Activated CD8-positive, alpha-beta T cell treated with anti-CD3 and anti-CD28 coated beads, Interleukin-2, amount 10 ng/mL, durations not matched to agents 7 days and 5 days (primary cell): ENCODE measurements at regions of chr7 and their contacts with region 1.

Region 1: GRCh38 chr7:73738612-73739374 is at the start of gene ABHD11:
- DNase-seq: peak; percentile 98
- ATAC-seq: peak; percentile 82
- H3K4me3 Mint-ChIP-seq: peak within 1 kb of the TSS; percentile 94
- H3K27ac Mint-ChIP-seq: peak within 1 kb of the TSS; percentile 98
- H3K4me1 Mint-ChIP-seq: peaks cover 29% of the 10 kb centered on the region
- H3K27me3 Mint-ChIP-seq: no peaks in the 10 kb centered on the region
- total RNA-seq, gene ABHD11: 20.7 to 20.9 TPM

Region 2: GRCh38 chr7:73522105-73522872 is 216.5 kb before region 1 on chr7 and contains the start of gene BAZ1B:
- CTCF ChIA-PET with region 1: interaction called, 3 read pairs
- POLR2A ChIA-PET with region 1: interaction called, 12 read pairs
- DNase-seq: peak; percentile 99
- ATAC-seq: peak; percentile 94
- H3K4me3 Mint-ChIP-seq: peak within 1 kb of the TSS; percentile 98
- H3K27ac Mint-ChIP-seq: peak within 1 kb of the TSS; percentile 100
- H3K4me1 Mint-ChIP-seq: peaks cover 62% of the 10 kb centered on the region
- H3K27me3 Mint-ChIP-seq: no peaks in the 10 kb centered on the region
- total RNA-seq, gene BAZ1B: 111 to 112 TPM

Region 3: GRCh38 chr7:73606801-73607691 is 131.7 kb before region 1 on chr7:
- CTCF ChIA-PET with region 1: interaction called, 115 read pairs
- POLR2A ChIA-PET with region 1: no interaction called
- DNase-seq: peak; percentile 71
- ATAC-seq: peak; percentile 83
- H3K4me3 Mint-ChIP-seq: no peak overlapping the region
- H3K27ac Mint-ChIP-seq: no peak overlapping the region
- H3K4me1 Mint-ChIP-seq: peaks cover 3% of the 10 kb centered on the region
- H3K27me3 Mint-ChIP-seq: peaks cover 11% of the 10 kb centered on the region

Region 4: DNA sequence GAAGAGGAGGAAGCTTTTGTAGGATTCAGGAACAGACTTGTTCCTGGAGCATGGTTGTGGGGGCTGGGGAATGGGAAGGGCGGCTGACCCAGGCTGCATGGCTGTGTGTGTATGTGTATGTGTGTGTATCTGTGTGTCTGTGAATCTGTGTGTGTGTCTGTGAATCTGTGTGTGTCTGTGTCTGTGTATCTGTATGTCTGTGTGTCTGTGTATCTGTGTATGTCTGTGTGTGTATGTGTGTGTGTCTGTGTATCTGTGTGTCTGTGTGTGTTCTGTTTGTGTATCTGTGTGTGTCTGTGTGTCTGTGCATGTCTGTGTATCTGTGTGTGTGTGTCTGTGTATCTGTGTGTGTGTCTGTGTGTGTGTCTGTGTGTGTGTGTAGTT is 12.7 kb before region 1 on chr7:
- CTCF ChIA-PET with region 1: interaction called, 16 read pairs
- POLR2A ChIA-PET with region 1: no interaction called
- DNase-seq: no peak
- ATAC-seq: peak; percentile 43
- H3K4me3 Mint-ChIP-seq: no peak overlapping the region
- H3K27ac Mint-ChIP-seq: no peak overlapping the region
- H3K4me1 Mint-ChIP-seq: no peaks in the 10 kb centered on the region
- H3K27me3 Mint-ChIP-seq: peaks cover 18% of the 10 kb centered on the region

Region 5: GRCh38 chr7:73851410-73852234 is 112.8 kb after region 1 on chr7:
- CTCF ChIA-PET with region 1: interaction called, 21 read pairs
- POLR2A ChIA-PET with region 1: no interaction called
- DNase-seq: peak; percentile 37
- ATAC-seq: peak; percentile 65
- H3K4me3 Mint-ChIP-seq: no peak overlapping the region
- H3K27ac Mint-ChIP-seq: no peak overlapping the region
- H3K4me1 Mint-ChIP-seq: peaks cover 24% of the 10 kb centered on the region
- H3K27me3 Mint-ChIP-seq: peaks cover 15% of the 10 kb centered on the region

Region 6: GRCh38 chr7:73856941-73857340 is 118.1 kb after region 1 on chr7:
- CTCF ChIA-PET with region 1: interaction called, 21 read pairs
- POLR2A ChIA-PET with region 1: no interaction called
- DNase-seq: no peak
- ATAC-seq: no peak
- H3K4me3 Mint-ChIP-seq: no peak overlapping the region
- H3K27ac Mint-ChIP-seq: no peak overlapping the region
- H3K4me1 Mint-ChIP-seq: peaks cover 12% of the 10 kb centered on the region
- H3K27me3 Mint-ChIP-seq: peaks cover 24% of the 10 kb centered on the region

Region 7: DNA sequence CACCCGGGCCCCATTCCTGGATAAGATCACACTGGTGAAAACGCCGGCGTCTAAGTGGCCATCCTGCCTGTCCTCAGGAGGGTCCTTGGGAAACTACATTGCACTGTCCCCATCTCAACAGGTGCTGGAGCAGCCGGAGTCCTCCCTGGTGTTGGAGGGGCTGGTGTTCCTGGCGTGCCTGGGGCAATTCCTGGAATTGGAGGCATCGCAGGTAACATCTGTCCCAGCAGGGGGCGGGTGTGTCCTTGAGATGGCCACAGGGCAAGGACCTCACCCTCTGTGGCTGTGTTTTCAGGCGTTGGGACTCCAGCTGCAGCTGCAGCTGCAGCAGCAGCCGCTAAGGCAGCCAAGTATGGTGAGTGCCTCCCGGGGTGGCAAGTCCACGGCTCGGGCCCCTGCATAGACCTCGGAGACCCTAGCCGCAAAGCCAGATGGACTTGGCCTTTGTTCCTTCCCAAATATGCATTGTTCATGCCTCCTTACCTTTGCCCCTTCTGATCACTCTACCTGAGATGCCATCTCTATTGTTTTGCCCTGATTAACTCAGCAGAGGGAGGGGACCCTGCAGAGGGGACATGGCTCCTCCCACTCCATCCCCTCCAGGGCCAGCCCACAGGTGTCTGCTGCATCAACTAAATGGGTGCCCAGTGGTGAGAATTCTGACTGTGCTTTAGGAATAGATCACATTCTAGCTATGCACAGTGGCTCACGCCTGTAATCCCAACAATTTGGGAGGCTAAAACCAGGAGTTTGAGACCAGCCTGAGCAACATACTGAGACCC is 313.0 kb after region 1 on chr7:
- CTCF ChIA-PET with region 1: no interaction called
- POLR2A ChIA-PET with region 1: no interaction called
- DNase-seq: no peak
- ATAC-seq: peak; percentile 27
- H3K4me3 Mint-ChIP-seq: no peak overlapping the region
- H3K27ac Mint-ChIP-seq: no peak overlapping the region
- H3K4me1 Mint-ChIP-seq: no peaks in the 10 kb centered on the region
- H3K27me3 Mint-ChIP-seq: no peaks in the 10 kb centered on the region